ENCODE measurements at regions of chr13 and their contacts with region 1.

Region 1: DNA sequence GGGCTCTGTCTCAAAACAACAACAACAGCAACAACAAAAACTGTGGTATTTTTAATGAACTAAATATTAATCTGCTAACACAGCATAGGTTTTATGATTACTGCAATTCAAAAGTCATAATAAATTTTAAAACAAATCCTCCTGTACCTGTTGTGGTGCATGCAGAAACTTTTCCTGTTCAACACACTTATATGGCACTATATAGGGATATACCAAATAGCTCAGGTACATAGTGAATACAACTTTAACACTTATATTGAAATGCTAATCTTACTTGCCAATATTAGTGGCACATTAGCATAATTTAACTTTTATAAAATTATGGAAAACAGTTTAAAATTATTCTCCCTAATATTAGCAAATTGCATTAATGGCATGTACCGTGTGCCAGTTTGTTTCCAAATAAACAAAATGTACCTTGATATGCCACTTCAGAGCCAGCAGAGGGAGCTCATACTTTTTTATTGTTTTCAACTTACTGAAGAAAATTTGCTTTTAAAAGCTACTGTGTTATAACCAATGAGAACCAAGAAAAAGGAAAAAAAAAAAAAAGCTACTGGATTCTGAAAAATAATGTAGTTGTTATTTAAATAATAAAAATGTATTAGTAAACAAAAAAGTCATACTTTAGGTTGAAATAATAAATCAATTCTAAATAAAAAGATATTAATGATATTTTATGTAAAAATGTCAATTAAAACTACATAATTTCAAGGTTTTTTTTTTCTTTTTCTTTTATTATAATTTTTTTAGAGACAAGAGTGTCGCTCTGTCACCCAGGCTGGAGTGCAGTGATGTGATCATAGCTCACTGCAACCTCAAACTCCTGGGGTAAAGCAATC is 18.0 kb upstream of the RBM26 start:
- DNase-seq: no peak
- ATAC-seq: peak; percentile 66
- H3K4me3 Mint-ChIP-seq: no peak overlapping the region
- H3K27ac Mint-ChIP-seq: no peak overlapping the region
- H3K4me1 Mint-ChIP-seq: peaks cover 11% of the 10 kb centered on the region
- H3K27me3 Mint-ChIP-seq: no peaks in the 10 kb centered on the region

Region 2: GRCh38 chr13:79393564-79394249 is 30.3 kb before region 1 on chr13:
- CTCF ChIA-PET with region 1: interaction called, 12 read pairs
- DNase-seq: peak; percentile 62
- ATAC-seq: peak; percentile 52
- H3K4me3 Mint-ChIP-seq: peak overlapping the region; percentile 38
- H3K27ac Mint-ChIP-seq: peak overlapping the region; percentile 67
- H3K4me1 Mint-ChIP-seq: peaks cover 55% of the 10 kb centered on the region
- H3K27me3 Mint-ChIP-seq: no peaks in the 10 kb centered on the region

Region 3: DNA sequence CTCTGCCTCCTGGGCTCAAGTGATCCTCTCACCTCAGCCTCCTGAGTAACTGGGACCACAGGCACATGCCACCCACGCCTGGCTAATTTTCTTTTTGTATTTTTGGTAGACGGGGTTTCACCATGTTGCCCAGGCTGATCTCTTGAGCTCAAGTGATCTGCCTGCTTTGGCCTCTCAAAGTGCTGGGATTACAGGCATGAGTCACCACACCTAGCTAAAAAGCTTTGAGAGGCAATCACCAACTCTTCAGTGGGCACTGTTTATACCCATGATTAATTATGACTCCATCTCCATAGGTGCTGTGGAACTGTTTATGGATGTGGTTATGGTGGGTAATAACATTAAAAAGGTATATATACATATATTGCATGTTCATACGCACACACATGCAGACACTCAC is 10.5 kb before region 1 on chr13:
- CTCF ChIA-PET with region 1: interaction called, 15 read pairs
- DNase-seq: no peak
- ATAC-seq: no peak
- H3K4me3 Mint-ChIP-seq: no peak overlapping the region
- H3K27ac Mint-ChIP-seq: no peak overlapping the region
- H3K4me1 Mint-ChIP-seq: peaks cover 14% of the 10 kb centered on the region
- H3K27me3 Mint-ChIP-seq: no peaks in the 10 kb centered on the region

Region 4: DNA sequence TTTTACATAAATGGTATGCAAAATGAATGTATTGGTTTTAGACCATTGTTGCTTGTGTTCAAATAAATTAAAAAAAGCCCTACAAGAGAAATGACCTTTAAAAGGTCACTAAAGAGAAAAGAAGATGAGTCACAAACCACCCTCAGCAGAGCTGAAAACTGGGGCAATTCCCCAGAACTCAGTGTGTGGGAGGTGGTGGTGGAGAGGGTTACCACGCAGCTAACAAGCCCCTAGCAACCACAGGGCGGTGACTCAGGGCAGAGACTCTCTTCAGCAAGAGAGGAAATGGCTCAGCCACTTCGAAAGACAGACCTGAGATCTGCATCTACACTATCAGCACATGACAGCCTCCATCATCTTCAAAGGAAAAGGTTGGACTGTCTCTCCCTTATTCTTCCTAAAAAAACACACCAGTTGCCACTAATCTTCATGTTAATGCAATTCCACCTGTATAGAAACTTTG is 27.5 kb after region 1 on chr13:
- CTCF ChIA-PET with region 1: interaction called, 11 read pairs
- DNase-seq: peak; percentile 97
- ATAC-seq: peak; percentile 99
- H3K4me3 Mint-ChIP-seq: peak overlapping the region; percentile 62
- H3K27ac Mint-ChIP-seq: peak overlapping the region; percentile 90
- H3K4me1 Mint-ChIP-seq: peaks cover 71% of the 10 kb centered on the region
- H3K27me3 Mint-ChIP-seq: no peaks in the 10 kb centered on the region

Region 5: GRCh38 chr13:79501538-79502232 is 77.7 kb after region 1 on chr13:
- CTCF ChIA-PET with region 1: interaction called, 10 read pairs
- DNase-seq: no peak
- ATAC-seq: peak; percentile 48
- H3K4me3 Mint-ChIP-seq: no peak overlapping the region
- H3K27ac Mint-ChIP-seq: peak overlapping the region; percentile 44
- H3K4me1 Mint-ChIP-seq: peaks cover 74% of the 10 kb centered on the region
- H3K27me3 Mint-ChIP-seq: no peaks in the 10 kb centered on the region

Region 6: DNA sequence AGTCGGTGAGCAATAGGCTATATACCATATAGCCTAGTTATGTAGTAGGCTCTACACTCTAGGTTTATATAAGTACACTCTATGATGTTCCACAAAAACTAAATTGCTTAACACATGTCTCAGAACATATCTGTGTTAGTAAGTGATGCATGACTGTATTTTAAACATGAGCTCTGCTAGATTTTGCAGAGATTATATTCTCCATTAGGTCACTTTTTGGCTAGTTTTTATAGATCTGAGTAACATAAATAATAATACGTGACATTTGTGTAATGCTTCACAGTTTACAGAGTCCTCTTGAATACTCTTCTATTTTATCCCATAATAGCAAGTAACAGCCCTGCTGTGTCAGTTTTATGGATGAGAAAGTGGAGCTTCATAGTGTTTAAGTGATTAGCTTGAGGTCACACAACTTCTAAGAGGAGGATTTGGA is 104.8 kb after region 1 on chr13:
- CTCF ChIA-PET with region 1: interaction called, 13 read pairs
- DNase-seq: no peak
- ATAC-seq: no peak
- H3K4me3 Mint-ChIP-seq: no peak overlapping the region
- H3K27ac Mint-ChIP-seq: no peak overlapping the region
- H3K4me1 Mint-ChIP-seq: peaks cover 33% of the 10 kb centered on the region
- H3K27me3 Mint-ChIP-seq: no peaks in the 10 kb centered on the region

Region 7: DNA sequence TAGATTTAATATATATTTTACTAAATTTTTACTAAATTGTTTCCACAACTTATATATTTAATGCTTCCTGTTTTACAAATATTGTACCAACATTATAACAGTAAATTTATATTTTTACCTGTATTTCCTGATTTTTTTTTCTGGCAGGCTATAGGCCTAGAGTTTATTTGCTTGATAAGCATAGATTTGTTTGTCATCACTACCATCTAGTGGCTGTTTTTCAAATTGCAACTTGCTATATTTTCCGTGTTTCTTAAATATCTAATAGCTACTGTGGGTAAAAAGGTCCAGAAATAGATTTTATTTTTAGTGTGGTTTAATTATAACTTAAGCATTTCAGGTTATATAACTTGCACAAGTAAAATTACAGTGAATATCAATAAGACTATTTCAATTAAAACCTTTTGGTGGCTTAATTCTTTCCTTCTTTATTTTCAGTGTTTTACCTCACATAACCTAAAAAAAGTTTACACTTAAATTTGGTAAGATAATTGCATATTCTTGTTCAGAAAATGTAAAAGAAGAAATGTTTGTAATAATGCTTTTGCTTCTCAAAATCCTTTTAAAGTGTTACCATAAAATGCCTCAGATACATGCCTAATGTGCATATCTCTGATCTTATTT is 117.5 kb after region 1 on chr13:
- CTCF ChIA-PET with region 1: interaction called, 129 read pairs
- DNase-seq: no peak
- ATAC-seq: peak; percentile 45
- H3K4me3 Mint-ChIP-seq: no peak overlapping the region
- H3K27ac Mint-ChIP-seq: no peak overlapping the region
- H3K4me1 Mint-ChIP-seq: peaks cover 9% of the 10 kb centered on the region
- H3K27me3 Mint-ChIP-seq: no peaks in the 10 kb centered on the region